CD14-positive monocyte (primary cell): ENCODE measurements at regions of chr14 and their contacts with region 1.

Region 1: DNA sequence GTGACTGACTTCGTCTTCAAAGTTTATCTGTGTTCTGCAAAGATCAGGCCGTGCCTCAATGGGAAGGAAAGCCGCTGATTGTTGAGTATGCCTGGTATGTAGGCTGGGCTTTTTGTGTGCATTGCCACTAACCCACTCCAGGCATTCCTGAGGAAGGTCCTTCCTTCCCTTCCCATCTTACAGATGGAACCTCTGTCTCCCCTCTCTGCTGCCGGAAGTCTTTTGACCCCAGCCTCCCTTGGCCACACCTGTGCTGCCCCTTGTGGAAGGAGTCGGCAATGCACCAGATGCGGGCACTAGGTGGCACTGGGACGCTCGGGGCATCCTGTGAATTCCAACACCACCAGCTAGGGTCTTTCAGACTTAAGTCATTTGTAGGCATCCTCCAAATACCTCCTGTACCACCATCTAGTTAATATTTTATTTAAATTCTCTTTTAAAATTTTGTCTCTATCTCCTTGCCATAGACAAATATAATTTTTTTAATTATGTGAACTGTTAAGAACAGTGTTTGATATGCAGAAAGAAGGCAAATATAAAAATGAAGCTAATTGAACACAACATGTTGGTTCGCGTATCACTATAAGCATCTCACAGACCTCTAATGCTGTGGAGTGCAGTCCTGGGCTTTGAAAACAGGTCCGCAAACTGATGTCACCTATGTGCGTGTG is 99.5 kb downstream of the RIN3 start:
- DNase-seq: peak; percentile 40 to 60 (median 58)
- H3K4me3 ChIP-seq: no peak overlapping the region
- H3K4me3 Mint-ChIP-seq: no peak overlapping the region
- H3K27ac ChIP-seq: peak overlapping the region in 1 of 2 donors; percentile 4
- H3K27ac Mint-ChIP-seq: peak overlapping the region in 3 of 7 donors; percentile 36 to 83 (median 66)
- H3K4me1 ChIP-seq: peaks cover 30 to 38% of the 10 kb centered on the region in 2 donors
- H3K4me1 Mint-ChIP-seq: peaks cover 59% of the 10 kb centered on the region
- H3K27me3 ChIP-seq: no peaks in the 10 kb centered on the region
- H3K27me3 Mint-ChIP-seq: peaks cover 0 to 8% (median 0%) of the 10 kb centered on the region in 3 donors
- CTCF ChIP-seq: peak; percentile 95

Region 2: DNA sequence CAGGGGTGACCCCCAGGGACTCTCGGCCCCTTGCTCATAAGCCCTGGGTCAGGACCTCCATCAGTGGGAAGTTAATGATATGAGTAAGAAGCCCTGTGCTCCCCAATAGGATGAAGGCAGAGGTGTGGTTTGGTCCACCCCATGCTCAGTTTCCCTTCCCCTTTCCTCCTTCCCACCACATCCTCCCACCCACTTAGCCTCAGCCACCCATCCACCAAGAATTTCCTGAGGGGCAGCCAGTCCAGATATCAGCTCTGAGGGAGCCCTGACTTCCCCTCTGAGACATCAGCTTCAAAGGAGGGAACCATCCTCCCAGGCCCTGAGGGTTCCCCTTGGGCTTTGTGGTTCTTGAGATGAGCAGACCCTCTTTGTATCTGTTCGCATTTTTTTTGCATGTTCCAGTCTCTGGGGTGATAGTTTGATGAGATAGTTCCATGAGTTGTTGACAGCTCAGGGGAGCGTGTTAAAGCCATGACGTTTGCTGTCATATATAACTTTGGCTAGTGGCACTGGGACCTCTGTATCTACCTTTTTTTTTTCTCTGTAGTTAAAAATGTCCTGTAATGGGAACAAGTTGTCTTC is 64.1 kb after region 1 on chr14:
- intact Hi-C with region 1: loop called in 1 of 2 experiments (anchors 5 kb)
- DNase-seq: peak in 2 of 3 donors; percentile 76 to 85
- H3K4me3 ChIP-seq: peak overlapping the region in 1 of 3 experiments; percentile 55
- H3K4me3 Mint-ChIP-seq: peak overlapping the region; percentile 61 to 67
- H3K27ac ChIP-seq: peak overlapping the region; percentile 82 to 85
- H3K27ac Mint-ChIP-seq: peak overlapping the region; percentile 87 to 97 (median 95)
- H3K4me1 ChIP-seq: peaks cover 51 to 64% of the 10 kb centered on the region in 2 donors
- H3K4me1 Mint-ChIP-seq: peaks cover 55% of the 10 kb centered on the region
- H3K27me3 ChIP-seq: no peaks in the 10 kb centered on the region
- H3K27me3 Mint-ChIP-seq: peaks cover 0 to 2% (median 0%) of the 10 kb centered on the region in 3 donors
- CTCF ChIP-seq: no peak